ENCODE measurements at regions of chr2 and their contacts with region 1.

Region 1: DNA sequence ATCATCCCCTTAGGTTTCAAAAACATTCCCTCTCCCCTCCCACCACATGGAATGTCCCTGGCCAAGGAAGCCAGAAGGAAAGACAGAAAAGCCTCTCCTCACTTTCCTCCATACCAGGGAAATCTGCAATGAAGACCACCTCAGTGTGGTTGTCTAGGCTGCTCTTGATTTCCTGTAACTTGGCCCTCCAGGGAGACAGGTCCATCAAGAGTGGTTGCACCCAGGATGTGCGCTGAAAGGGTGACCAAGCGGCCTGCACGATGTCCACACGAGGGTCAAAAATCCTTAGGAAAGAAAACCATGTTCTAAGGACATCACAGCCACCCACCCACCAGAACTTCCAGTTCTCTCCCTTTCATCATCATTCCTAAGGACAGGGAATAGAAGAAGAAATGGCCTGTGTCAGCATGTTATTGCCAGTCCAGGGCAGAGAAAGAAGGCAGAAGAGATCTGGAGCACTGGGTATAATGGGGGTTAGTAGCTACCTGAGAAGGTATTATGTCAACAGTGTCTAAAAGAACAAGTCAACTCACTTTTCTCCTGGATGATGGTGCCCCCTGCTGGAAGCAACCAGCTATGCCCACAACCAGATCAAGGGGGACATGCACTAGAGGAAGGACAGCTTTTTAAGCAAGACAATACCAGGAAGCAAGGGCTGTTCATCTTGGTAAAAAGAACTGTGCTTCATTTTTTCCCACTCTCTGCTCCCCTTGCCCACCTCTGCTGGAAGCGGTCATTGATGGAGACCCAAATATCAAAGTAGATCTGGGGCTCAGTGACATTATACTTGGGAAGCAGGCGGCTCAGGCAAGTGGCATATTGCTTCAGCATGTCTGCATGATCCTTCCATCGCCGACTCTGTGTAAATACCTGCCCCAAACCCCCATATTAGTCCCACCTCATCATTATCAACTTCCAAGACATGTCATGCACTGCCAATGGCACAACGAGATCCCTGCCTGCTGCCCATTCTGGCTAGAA is 9.3 kb downstream of the GGCX start:
- DNase-seq: peak; percentile 71

Region 2: DNA sequence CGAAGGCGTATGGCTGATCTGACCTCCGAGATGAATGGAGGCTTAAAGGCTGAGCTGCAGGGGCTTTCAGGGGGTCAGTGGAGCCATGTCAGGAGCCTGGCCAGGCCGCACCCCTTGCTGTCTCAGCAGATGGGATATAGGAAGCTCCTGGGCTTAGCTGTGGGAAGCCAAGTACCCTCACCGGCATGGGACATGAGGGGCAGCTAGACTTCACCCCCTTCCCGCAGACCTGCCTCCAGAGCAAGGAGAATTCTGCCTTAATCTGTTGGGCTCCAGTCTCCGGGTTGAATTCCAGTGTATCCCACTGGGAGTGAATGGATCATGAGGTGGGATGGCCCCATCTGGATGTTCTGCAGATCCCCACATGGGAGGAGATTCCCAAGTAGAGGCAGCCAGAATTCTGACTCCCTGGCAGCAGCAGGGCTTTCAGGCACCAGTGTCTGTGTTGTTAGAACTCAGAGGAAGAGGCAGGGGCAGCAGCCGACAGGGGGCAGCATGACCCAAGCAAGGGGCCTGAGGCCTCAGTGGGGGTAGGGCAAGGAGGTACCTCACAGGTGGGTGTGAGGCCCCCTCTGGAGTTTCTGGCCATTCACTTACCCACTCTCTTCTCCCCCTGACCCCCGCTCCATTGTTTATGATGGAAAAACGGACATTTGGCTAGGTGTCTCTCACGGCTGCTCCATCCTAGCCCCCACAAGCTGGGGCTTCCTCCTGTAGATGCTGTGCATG is 160.9 kb before region 1 on chr2:
- CTCF ChIA-PET with region 1: interaction called, 14 read pairs
- POLR2A ChIA-PET with region 1: interaction called, 5 read pairs
- DNase-seq: peak; percentile 76

Region 3: DNA sequence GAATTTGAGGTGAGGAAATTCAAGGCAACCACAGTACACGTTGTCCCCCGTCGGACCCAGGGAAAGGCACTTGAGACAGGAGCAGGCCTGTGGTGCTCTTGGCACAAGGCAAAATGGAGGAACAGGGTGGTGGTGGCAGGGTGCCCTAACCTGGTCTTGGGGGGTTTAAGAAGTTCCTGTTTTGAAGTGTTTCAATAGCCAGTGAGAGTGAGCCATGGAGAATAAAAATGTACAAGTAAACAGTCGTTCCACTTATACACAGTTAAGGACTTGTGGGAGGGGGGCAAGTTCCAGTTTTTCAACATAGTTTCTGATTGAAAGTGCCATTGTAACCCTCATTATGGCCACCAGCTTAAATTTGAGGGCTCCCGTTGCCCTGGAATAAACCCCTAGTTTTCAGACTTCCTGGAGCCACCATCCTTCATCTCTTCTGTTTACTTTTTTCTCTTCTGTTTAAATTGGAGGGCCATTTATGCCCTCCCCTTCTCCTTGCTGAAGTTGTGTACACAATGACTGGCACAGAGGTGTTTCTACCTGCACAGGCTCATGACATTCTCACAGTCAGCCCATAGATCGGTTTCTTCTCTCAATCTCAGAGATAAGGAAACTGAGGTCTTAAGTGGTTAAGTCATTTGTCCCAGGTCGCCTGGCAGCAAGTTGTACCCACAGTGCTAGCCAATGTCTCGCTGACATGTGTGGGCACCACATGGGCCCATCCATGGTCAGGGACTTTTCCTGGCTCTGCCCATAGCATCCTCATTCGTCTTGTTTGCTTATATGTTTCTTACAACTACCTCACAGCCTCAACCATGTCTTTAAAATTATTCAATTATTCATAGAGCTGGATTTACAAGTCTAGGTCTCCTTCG is 402.8 kb after region 1 on chr2:
- CTCF ChIA-PET with region 1: no interaction called
- POLR2A ChIA-PET with region 1: no interaction called
- DNase-seq: no peak

Measured in HEK293T (cell line).